HepG2 (cell line): ENCODE measurements at regions of chr1 and their contacts with region 1.

Region 1: GRCh38 chr1:110524311-110525251 is 5.6 kb upstream of the KCNA10 start:
- DNase-seq: peak; percentile 21
- ATAC-seq: peak; percentile 87
- H3K4me3 ChIP-seq: no peak overlapping the region; a peak in 1 of 6 replicates
- H3K27ac ChIP-seq: no peak overlapping the region
- H3K4me1 ChIP-seq: no peaks in the 10 kb centered on the region
- H3K27me3 ChIP-seq: no peaks in the 10 kb centered on the region; a peak in 1 of 5 replicates
- CTCF ChIP-seq: peak; percentile 80
- EP300 ChIP-seq: no peak
- POLR2A ChIP-seq: no peak
- RAD21 ChIP-seq: peak; percentile 38

Region 2: DNA sequence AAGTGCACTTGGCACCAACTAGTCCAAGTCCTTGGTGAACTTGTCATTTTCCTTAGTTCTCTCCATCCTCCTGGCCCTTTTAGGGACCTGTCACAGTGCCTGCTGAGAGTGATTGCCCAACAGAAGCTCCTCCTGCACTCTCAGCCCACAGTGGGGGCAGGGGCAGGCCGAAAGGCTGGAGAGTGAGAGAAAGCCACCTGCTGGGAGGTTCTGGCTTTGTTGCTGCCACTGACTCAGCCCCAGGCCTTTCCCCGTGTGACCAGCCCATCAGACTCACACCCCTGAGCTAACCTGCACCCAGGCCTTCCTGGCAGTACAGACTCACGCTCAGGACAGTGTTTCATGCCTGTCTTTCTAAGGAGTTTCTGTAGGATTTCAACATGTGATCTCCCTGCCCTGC is 90.8 kb before region 1 on chr1:
- CTCF ChIA-PET with region 1: no interaction called
- POLR2A ChIA-PET with region 1: no interaction called
- in situ Hi-C with region 1: no loop called
- intact Hi-C with region 1: no loop called
- DNase-seq: peak; percentile 58
- ATAC-seq: peak; percentile 99
- H3K4me3 ChIP-seq: no peak overlapping the region
- H3K27ac ChIP-seq: no peak overlapping the region
- H3K4me1 ChIP-seq: peaks cover 10% of the 10 kb centered on the region; the same call in 1 of the 2 replicates
- H3K27me3 ChIP-seq: peaks cover 1 to 23% of the 10 kb centered on the region in 2 experiments; a peak in 4 of 5 replicates
- CTCF ChIP-seq: peak; percentile 55
- EP300 ChIP-seq: no peak
- POLR2A ChIP-seq: no peak
- RAD21 ChIP-seq: peak; percentile 56

Region 3: DNA sequence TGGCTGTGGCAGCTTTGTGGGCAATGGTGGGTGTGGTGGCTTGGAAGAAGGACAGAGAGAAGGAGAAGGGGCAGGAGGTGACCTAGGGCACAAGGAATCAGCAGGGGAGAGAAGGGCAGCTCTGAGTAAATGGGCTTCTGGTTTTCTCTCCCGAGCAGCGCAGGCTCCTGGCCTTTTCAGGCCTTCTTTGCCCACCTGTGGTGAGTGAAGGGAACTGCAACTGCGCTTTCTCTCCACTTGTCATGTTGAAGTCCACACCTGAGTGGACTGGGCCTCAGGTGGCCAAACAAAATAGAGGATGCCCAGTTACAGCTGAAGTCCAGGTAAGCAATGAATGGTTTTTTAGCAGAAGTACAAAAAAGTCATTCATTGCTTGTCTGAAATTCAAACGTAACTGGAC is 23.8 kb after region 1 on chr1:
- CTCF ChIA-PET with region 1: interaction called, 4 read pairs
- POLR2A ChIA-PET with region 1: no interaction called
- in situ Hi-C with region 1: no loop called
- intact Hi-C with region 1: loop called (anchors 2 kb)
- DNase-seq: peak; percentile 41
- ATAC-seq: peak; percentile 98
- H3K4me3 ChIP-seq: no peak overlapping the region
- H3K27ac ChIP-seq: no peak overlapping the region
- H3K4me1 ChIP-seq: no peaks in the 10 kb centered on the region
- H3K27me3 ChIP-seq: 0 out of 5 replicates have a peak, but pooled peaks cover 0 to 2% of the 10 kb centered on the region in 2 experiments
- CTCF ChIP-seq: peak; percentile 40
- EP300 ChIP-seq: no peak
- POLR2A ChIP-seq: no peak
- RAD21 ChIP-seq: no peak